CD8-positive, alpha-beta memory T cell (primary cell): ENCODE measurements at regions of chr2 and their contacts with region 1.

Region 1: GRCh38 chr2:172465417-172466334 is 38.3 kb downstream of the ITGA6 start:
- DNase-seq: peak; percentile 51 to 78 (median 66)
- H3K4me3 ChIP-seq: peak overlapping the region; percentile 55
- H3K4me3 Mint-ChIP-seq: peak overlapping the region; percentile 4 to 87 (median 58)
- H3K27ac ChIP-seq: no peak overlapping the region
- H3K27ac Mint-ChIP-seq: peak overlapping the region; percentile 7 to 91 (median 68)
- H3K4me1 ChIP-seq: peaks cover 52% of the 10 kb centered on the region
- H3K4me1 Mint-ChIP-seq: peaks cover 55 to 58% (median 55%) of the 10 kb centered on the region in 3 donors
- H3K27me3 ChIP-seq: no peaks in the 10 kb centered on the region
- H3K27me3 Mint-ChIP-seq: no peaks in the 10 kb centered on the region

Region 2: DNA sequence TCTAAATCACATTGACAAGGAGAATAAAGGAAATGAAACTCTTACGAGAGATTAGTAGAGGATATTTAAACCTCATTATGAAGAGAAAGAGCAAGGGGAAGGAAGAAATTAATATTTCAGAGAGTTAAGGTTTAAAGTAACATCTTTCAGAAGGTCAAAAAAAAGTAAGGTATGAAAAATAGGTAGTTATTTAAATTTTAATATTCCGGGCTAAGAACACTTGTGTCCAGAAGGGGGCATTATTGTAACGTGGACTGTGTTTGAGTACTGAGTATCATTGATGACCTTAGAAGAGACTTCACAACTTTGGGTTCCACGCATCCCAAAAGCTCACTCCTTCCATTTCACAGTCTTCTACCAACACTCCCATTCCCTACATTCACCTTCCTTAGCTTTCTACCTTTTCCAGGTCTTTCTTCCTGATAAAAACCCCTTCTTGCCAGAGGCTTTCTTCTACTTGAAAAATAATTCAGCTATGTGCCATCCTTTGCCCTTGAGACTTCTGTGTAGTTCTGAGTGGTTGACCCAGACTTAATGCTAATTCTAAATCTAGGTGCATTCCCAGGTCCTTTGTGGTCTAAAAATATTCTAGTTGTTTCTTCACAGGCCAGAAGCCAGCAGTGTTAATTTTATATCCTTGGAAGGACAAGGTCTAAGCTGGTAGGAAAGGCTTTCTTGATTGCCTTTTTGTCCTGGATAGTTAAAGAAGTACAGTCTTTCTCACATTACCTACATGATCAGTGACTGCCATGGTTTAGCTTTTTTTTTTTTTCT is 761.9 kb before region 1 on chr2:
- CTCF ChIA-PET with region 1: interaction called, 12 read pairs
- POLR2A ChIA-PET with region 1: no interaction called
- DNase-seq: peak in 2 of 5 donors; percentile 8 to 13
- H3K4me3 ChIP-seq: no peak overlapping the region
- H3K4me3 Mint-ChIP-seq: no peak overlapping the region
- H3K27ac ChIP-seq: no peak overlapping the region
- H3K27ac Mint-ChIP-seq: peak overlapping the region in 5 of 8 donors; percentile 17 to 76 (median 58)
- H3K4me1 ChIP-seq: no peaks in the 10 kb centered on the region
- H3K4me1 Mint-ChIP-seq: peaks cover 14 to 31% (median 16%) of the 10 kb centered on the region in 3 donors
- H3K27me3 ChIP-seq: no peaks in the 10 kb centered on the region
- H3K27me3 Mint-ChIP-seq: no peaks in the 10 kb centered on the region

Region 3: DNA sequence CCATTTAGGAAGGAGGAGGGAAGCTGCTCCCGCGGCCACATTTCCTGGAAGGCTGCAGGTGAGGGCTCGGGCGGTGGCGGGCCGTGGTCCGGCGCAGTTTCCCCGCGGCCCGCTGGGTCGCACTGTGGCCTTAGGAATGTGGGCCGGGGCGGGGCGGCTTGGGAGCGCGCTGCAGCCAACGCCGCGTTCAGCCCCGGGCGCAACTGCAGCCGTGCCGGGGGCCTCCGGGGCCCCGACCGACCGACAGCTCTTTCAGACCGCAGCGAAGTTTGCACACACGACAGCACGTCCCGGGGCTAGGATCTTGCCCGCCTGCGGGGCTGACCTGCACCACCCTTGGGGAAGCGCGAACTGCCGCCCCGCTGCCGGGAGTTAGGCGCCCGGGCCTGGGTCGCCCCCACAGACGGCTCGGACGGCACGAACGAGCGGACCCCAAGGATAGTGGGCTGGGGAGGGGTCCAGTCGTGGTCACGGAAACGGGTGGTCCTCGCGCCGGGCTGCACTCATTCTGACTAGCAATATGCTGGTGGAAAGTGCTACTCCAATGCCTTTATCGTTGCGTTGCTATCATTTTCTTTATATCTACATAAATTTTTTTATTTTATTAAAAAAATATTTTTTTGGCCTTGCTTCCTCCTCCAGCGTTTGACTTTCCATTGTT is 293.0 kb before region 1 on chr2:
- CTCF ChIA-PET with region 1: interaction called, 113 read pairs
- POLR2A ChIA-PET with region 1: interaction called, 3 read pairs
- DNase-seq: peak; percentile 34 to 67 (median 55)
- H3K4me3 ChIP-seq: peak overlapping the region; percentile 50
- H3K4me3 Mint-ChIP-seq: peak overlapping the region; percentile 24 to 78 (median 66)
- H3K27ac ChIP-seq: no peak overlapping the region
- H3K27ac Mint-ChIP-seq: no peak overlapping the region
- H3K4me1 ChIP-seq: no peaks in the 10 kb centered on the region
- H3K4me1 Mint-ChIP-seq: peaks cover 5 to 11% (median 7%) of the 10 kb centered on the region in 3 donors
- H3K27me3 ChIP-seq: no peaks in the 10 kb centered on the region
- H3K27me3 Mint-ChIP-seq: peaks cover 10 to 17% of the 10 kb centered on the region in 2 donors

Region 4: GRCh38 chr2:172442072-172442895 is 23.4 kb before region 1 on chr2:
- CTCF ChIA-PET with region 1: interaction called, 582 read pairs
- POLR2A ChIA-PET with region 1: interaction called, 30 read pairs
- DNase-seq: peak in 2 of 5 donors; percentile 60 to 61
- H3K4me3 ChIP-seq: peak overlapping the region; percentile 29
- H3K4me3 Mint-ChIP-seq: peak overlapping the region; percentile 69 to 88 (median 78)
- H3K27ac ChIP-seq: no peak overlapping the region
- H3K27ac Mint-ChIP-seq: peak overlapping the region; percentile 38 to 75 (median 68)
- H3K4me1 ChIP-seq: peaks cover 73% of the 10 kb centered on the region
- H3K4me1 Mint-ChIP-seq: peaks cover 15 to 57% (median 45%) of the 10 kb centered on the region in 3 donors
- H3K27me3 ChIP-seq: no peaks in the 10 kb centered on the region
- H3K27me3 Mint-ChIP-seq: no peaks in the 10 kb centered on the region

Region 5: GRCh38 chr2:172484253-172484652 is 18.6 kb after region 1 on chr2:
- CTCF ChIA-PET with region 1: interaction called, 12 read pairs
- POLR2A ChIA-PET with region 1: no interaction called
- DNase-seq: peak in 1 of 5 donors; percentile 48
- H3K4me3 ChIP-seq: no peak overlapping the region
- H3K4me3 Mint-ChIP-seq: no peak overlapping the region
- H3K27ac ChIP-seq: no peak overlapping the region
- H3K27ac Mint-ChIP-seq: peak overlapping the region in 3 of 8 donors; percentile 1 to 76 (median 44)
- H3K4me1 ChIP-seq: peaks cover 40% of the 10 kb centered on the region
- H3K4me1 Mint-ChIP-seq: peaks cover 18 to 40% (median 29%) of the 10 kb centered on the region in 3 donors
- H3K27me3 ChIP-seq: no peaks in the 10 kb centered on the region
- H3K27me3 Mint-ChIP-seq: peaks cover 0 to 2% of the 10 kb centered on the region in 2 donors